Mammary epithelial cell (primary cell): ENCODE measurements at regions of chr7 and their contacts with region 1.

Region 1: DNA sequence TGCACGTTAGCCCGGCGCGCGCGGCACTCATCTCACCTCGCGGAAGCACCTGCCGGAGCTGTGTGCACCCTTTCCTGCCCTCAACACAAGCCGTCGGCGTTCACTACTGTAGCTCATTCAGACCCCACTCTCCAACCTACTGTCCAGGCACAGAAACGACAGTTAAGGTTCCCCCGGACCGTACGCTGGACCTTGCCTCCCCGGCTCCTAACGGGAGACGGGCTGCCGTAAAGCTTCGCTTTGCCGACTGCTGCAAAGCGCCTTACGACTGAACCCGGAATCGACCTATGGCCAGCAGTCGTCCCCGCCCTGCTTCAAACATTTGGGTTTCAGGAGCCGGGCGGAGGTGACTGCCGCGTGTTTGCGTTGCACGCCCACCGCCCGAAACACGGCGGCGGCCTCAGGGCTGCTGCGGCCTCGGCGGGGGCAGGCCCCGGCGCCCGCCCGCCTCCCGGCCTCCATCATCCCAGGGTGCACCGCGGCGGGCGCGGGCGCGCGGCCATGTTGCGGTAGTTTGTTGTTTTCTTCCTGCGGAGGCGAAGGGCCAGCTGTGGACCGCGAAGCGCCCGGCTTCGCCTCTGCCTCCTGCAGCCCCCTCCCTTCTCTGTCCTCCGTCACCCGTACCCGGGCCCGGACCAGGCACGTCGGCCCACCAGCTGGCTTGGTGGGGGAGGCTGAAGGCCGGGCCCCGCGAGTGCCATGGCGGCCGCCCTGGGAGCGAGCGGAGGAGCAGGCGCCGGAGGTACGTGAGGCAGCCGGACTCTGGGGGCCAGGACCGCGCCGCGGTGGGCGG is at the start of gene RBM33:
- DNase-seq: peak; percentile 87
- H3K4me3 ChIP-seq: peak within 1 kb of the TSS; percentile 94 to 96 (median 95)
- H3K27ac ChIP-seq: peak within 1 kb of the TSS; percentile 79
- H3K4me1 ChIP-seq: peaks cover 9% of the 10 kb centered on the region
- H3K27me3 ChIP-seq: no peaks in the 10 kb centered on the region
- CTCF ChIP-seq: no peak
- total RNA-seq, gene RBM33: 22.2 to 54.3 TPM

Region 2: DNA sequence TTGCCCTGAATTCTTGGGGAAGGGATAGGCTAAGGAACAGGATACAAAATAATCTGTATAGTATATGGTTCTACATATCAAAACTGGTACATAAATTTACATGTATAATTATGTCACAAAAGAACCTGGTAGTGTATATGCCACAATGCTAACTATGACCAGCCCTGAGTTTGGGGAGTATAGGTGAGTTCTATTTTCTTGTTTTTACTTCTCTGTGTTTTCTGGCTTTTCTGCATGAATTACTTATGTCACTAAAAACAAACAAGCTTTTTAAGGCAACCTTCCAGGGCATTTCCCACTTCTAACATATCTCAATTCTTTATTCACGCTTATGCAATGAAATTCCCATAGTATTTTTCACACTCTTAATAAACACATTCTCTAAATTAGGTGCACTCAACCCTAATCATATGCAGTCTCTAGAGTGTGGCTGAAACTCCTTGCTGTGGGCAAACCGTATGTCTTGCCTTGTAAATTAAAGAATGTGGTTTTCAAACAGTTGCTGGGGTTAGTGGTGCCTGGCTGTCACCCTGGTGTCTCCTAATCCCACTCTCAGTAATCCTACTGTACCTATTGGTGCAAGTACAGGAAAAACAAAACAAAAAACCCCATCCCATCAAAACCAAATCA is 360.7 kb before region 1 on chr7:
- CTCF ChIA-PET with region 1: no interaction called
- dilution Hi-C with region 1: no loop called
- in situ Hi-C with region 1: no loop called
- intact Hi-C with region 1: no loop called
- DNase-seq: no peak
- H3K4me3 ChIP-seq: no peak overlapping the region
- H3K27ac ChIP-seq: no peak overlapping the region
- H3K4me1 ChIP-seq: no peaks in the 10 kb centered on the region
- H3K27me3 ChIP-seq: peaks cover 6% of the 10 kb centered on the region
- CTCF ChIP-seq: no peak

Region 3: DNA sequence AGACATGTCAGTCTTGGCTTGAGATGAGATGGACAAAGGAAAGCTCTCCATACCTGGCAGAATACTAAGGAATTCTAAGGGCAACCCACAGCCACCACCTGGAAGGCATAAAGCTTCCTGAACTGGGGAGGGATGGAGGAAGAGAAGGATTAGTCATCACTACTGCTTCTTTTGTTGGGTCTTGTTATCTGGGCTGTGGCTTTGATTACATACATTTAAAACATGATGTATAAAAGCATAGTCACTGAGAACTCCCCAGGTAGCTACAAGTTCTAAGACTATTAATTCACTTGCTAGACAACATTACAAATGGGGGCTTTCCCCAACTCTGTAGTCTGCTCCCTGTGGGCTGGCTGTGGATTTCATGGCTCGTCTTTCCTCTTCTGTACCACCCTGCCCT is 58.2 kb after region 1 on chr7:
- CTCF ChIA-PET with region 1: no interaction called
- dilution Hi-C with region 1: no loop called
- in situ Hi-C with region 1: no loop called
- intact Hi-C with region 1: loop called (anchors 1 kb)
- DNase-seq: peak; percentile 93
- H3K4me3 ChIP-seq: no peak overlapping the region
- H3K27ac ChIP-seq: no peak overlapping the region
- H3K4me1 ChIP-seq: peaks cover 17% of the 10 kb centered on the region
- H3K27me3 ChIP-seq: no peaks in the 10 kb centered on the region
- CTCF ChIP-seq: no peak

Region 4: GRCh38 chr7:155729834-155730233 is 85.5 kb after region 1 on chr7:
- CTCF ChIA-PET with region 1: no interaction called
- dilution Hi-C with region 1: no loop called
- in situ Hi-C with region 1: no loop called
- intact Hi-C with region 1: loop called (anchors 2 kb)
- DNase-seq: peak; percentile 87
- H3K4me3 ChIP-seq: no peak overlapping the region
- H3K27ac ChIP-seq: peak overlapping the region; percentile 32
- H3K4me1 ChIP-seq: peaks cover 47% of the 10 kb centered on the region
- H3K27me3 ChIP-seq: no peaks in the 10 kb centered on the region
- CTCF ChIP-seq: no peak